CD4-positive, alpha-beta T cell (primary cell): ENCODE measurements at regions of chr16 and their contacts with region 1.

Region 1: GRCh38 chr16:68538880-68539701 is at the start of gene ZFP90:
- DNase-seq: peak; percentile 69 to 93 (median 80)
- ATAC-seq: peak; percentile 86
- H3K4me3 ChIP-seq: peak within 1 kb of the TSS; percentile 79
- H3K4me3 Mint-ChIP-seq: peak within 1 kb of the TSS; percentile 97
- H3K27ac ChIP-seq: peak within 1 kb of the TSS; percentile 80 to 94
- H3K27ac Mint-ChIP-seq: peak within 1 kb of the TSS; percentile 100
- H3K4me1 ChIP-seq: peaks cover 21% of the 10 kb centered on the region
- H3K4me1 Mint-ChIP-seq: peaks cover 30% of the 10 kb centered on the region
- H3K27me3 ChIP-seq: no peaks in the 10 kb centered on the region
- H3K27me3 Mint-ChIP-seq: no peaks in the 10 kb centered on the region
- CTCF ChIP-seq: no peak
- total RNA-seq, gene ZFP90: 23.3 to 24.3 TPM

Region 2: GRCh38 chr16:68520649-68521086 is 18.4 kb before region 1 on chr16:
- CTCF ChIA-PET with region 1: interaction called, 12 read pairs
- POLR2A ChIA-PET with region 1: interaction called, 3 read pairs
- intact Hi-C with region 1: no loop called
- DNase-seq: peak; percentile 77 to 95 (median 83)
- ATAC-seq: peak; percentile 98
- H3K4me3 ChIP-seq: peak overlapping the region; percentile 26
- H3K4me3 Mint-ChIP-seq: peak overlapping the region; percentile 43
- H3K27ac ChIP-seq: no peak overlapping the region
- H3K27ac Mint-ChIP-seq: peak overlapping the region; percentile 71
- H3K4me1 ChIP-seq: peaks cover 10% of the 10 kb centered on the region
- H3K4me1 Mint-ChIP-seq: peaks cover 7% of the 10 kb centered on the region
- H3K27me3 ChIP-seq: no peaks in the 10 kb centered on the region
- H3K27me3 Mint-ChIP-seq: peaks cover 5% of the 10 kb centered on the region
- CTCF ChIP-seq: peak; percentile 99

Region 3: GRCh38 chr16:68596231-68596630 is 57.1 kb after region 1 on chr16:
- CTCF ChIA-PET with region 1: no interaction called
- POLR2A ChIA-PET with region 1: no interaction called
- intact Hi-C with region 1: no loop called
- DNase-seq: no peak
- ATAC-seq: no peak
- H3K4me3 ChIP-seq: no peak overlapping the region
- H3K4me3 Mint-ChIP-seq: no peak overlapping the region
- H3K27ac ChIP-seq: no peak overlapping the region
- H3K27ac Mint-ChIP-seq: no peak overlapping the region
- H3K4me1 ChIP-seq: no peaks in the 10 kb centered on the region
- H3K4me1 Mint-ChIP-seq: no peaks in the 10 kb centered on the region
- H3K27me3 ChIP-seq: no peaks in the 10 kb centered on the region
- H3K27me3 Mint-ChIP-seq: no peaks in the 10 kb centered on the region
- CTCF ChIP-seq: no peak

Region 4: GRCh38 chr16:68951991-68952877 is 413.1 kb after region 1 on chr16:
- CTCF ChIA-PET with region 1: no interaction called
- POLR2A ChIA-PET with region 1: no interaction called
- intact Hi-C with region 1: no loop called
- DNase-seq: no peak
- ATAC-seq: no peak
- H3K4me3 ChIP-seq: no peak overlapping the region
- H3K4me3 Mint-ChIP-seq: no peak overlapping the region
- H3K27ac ChIP-seq: no peak overlapping the region
- H3K27ac Mint-ChIP-seq: no peak overlapping the region
- H3K4me1 ChIP-seq: no peaks in the 10 kb centered on the region
- H3K4me1 Mint-ChIP-seq: no peaks in the 10 kb centered on the region
- H3K27me3 ChIP-seq: no peaks in the 10 kb centered on the region
- H3K27me3 Mint-ChIP-seq: no peaks in the 10 kb centered on the region
- CTCF ChIP-seq: no peak